Left cardiac atrium (tissue), 4 donors: ENCODE measurements at regions of chr15 and their contacts with region 1.

Region 1: DNA sequence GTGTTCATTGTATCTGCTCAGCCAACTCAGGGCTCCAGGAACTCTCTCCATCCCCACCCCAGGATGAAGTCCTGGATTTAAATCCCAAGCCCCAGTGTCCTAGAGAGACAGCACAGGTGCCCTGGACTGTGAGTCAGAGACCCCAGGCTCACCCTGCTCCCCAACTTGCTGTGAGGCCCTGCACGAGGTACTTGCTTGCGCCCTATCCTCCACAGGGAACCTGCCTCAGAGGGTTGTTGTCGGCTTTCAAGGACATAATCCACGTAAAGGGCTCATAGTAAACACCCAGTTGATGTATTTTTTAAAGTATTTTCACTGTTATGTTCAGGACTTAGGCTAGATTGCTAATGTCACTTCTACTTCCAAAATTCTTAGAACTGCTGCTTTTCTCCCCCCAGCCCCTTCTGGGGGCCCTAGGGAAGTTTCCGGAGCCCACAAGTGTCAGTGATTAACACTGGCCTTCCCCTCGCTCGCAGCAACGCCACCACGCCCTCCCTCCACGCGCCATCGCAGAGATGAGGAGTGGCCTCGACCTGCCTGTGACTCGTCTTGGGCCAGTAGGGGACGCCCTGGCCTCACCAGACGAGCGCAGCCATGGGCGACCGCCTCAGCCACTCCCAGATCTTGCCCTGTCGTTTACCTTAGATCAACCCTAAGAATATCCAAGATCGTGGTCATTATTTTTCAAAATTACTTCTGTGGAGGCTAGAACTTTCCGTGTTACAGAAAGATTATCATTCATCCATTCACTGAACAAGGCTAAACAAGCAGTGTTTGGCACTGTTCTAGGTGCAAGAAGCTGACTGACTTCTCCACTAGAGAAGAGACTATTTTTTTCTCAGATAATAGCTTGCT is 6.0 kb upstream of the SRP14 start:
- DNase-seq: peak; percentile 90
- ATAC-seq: peak; percentile 92 to 97

Region 2: DNA sequence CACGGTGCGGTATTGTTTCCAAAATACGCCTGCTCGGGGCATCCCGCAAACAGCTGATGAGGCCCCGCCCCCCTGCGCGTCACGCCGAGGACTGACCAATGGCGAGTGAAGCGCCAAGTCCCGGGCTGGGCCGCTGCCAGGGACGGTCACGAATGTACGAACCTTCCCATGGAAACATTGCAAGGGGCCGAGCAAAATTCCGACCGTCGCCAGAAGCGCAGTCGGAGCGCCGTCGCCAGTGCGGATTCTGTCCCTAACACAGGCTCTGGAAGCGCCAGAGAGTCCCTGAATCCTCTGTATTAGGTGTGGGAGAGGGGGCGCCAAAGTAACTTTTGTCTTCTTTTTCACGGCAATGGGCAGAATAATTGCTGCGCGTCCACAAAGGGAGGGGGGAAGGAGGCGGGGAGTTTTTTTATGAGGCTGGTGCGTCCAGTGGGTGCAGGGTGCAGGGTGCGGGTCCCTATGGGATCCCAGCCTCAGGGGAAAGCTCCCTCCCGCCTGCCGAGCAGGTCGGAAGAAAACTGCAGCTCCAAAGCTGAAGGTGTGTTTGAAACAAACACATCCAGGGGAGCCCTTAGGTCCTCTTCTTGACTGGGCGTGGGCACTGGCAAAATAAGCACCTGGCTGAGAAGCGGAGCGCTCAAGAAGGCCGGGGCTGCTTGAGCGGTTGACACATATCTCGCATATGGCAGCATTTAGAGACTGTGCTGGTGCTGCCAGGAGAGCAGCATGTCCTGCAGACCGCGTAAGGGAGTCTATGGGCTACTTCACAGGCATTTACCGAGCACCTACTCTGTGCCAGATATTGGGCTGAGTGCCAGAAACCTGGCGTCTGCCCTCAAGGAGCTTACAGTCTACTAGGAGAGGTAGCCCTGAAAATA is 64.2 kb after region 1 on chr15 and contains the start of gene BMF:
- intact Hi-C with region 1: loop called (anchors 5 kb)
- DNase-seq: peak; percentile 100
- ATAC-seq: peak; percentile 85
- total RNA-seq, gene BMF: 1.9 to 5.0 TPM

Region 3: DNA sequence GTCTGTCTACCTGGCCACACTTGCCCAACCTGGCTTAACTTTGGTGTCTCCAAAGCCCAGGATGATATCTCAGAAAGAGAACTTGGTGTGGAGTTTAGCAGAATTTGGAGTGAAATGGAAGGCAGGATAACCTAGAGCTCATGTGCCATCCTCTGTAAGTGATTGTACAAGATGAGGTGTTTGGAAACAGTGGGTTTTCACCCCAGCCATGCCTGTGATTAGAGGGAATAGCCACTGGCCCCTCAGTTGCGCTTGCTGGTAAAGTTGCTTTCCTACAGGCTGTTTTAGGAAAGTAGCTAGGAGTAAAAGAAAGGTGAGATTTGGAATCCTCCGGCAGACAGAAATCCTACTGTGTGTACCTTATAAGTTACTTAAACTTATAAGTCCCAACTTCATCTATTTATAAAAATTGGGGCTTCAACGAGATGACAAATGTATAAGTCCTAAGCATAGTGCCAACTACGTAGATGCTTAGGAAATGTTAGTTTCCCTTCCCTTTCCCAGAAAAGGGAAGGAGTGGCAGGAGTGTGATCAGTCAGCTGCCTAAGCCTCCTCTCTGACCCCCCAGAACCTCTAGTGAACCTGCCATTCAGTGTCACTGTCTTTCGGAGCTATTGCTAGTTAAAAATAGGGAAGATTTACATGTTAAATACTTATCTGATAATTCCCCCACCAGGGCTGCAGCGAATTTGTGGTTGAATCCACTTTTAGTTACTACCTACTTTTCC is 77.1 kb after region 1 on chr15:
- intact Hi-C with region 1: no loop called
- DNase-seq: no peak
- ATAC-seq: peak in 1 of 2 donors; percentile 68

Region 4: DNA sequence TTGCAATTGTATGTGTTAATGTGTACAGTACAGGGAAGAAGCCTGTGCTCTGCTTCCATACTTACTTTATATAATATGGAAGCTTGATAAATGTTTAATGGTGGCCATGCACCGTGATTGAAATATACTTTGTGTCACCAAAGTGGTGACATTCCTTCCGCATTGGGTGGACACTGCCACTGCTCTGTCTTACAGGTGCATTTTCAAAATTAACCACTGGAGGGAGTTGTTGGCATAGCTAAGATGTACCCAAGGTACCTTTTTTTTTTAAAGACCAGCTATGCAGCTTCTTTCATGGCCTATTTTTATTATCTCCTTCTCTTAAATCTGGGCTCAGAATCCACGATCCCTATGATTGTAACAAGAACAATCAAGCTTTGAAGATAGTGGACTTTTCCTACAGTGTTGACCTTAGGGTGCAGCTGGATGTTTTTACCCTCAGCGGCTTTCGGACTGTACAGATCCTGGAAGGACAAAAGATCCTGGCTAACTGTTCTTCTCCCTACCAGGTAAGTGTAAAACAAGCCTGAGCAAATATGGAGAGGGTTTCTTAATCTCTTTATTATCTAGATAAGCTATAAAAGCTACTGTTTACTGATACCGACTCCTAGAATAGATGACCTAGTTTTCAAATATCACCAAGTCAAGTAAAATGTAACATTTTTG is 172.3 kb after region 1 on chr15:
- intact Hi-C with region 1: loop called in 1 of 2 experiments (anchors 2 kb)
- DNase-seq: no peak
- ATAC-seq: peak; percentile 90 to 93

Region 5: GRCh38 chr15:40274350-40275274 is 229.7 kb after region 1 on chr15:
- intact Hi-C with region 1: loop called (anchors 1 to 5 kb)
- DNase-seq: peak; percentile 81
- ATAC-seq: peak; percentile 36 to 46